Spleen (tissue), 13 donors: ENCODE measurements at regions of chr17 and their contacts with region 1.

Region 1: DNA sequence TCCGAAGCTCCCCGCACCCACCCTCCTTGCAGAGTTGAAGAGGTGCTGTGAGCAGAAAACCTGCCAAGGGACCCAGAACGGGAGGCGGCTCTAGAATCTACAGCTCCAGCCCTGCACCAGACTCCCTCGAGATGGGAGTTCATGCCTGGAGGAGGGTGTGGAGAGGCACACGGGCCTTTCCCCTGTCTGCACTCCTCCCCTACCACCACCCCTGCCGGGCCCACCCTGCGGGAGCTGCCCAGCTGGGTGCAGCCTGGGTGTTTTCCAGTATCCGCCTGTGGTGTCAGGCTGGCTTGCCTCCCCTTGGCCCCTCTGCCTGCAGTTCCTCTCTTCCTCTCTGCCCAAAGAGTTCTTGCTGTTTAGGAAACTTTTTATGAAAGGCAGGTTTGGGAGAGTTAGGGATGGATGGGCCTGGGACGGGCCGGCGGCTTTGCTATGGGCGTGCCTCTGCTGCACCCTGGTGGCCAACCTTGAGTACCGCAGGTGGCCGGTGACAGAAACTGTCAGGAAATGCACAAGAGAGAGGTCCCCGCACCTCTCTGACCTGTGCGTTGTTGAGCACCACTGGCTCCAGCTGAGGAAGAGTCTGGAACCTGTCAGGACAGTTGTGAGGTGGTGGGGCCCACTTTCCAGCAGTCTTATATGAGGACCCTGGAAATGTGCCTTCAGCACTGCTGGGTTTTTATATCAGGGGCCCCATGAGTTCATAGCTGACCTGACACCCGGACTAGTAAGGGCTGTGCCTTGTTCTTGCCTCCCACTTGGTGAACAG is 354.1 kb downstream of the SEC14L1 start:
- DNase-seq: peak; percentile 93
- H3K4me3 ChIP-seq: no peak overlapping the region
- H3K27ac ChIP-seq: peak overlapping the region; percentile 1 to 79 (median 52)
- H3K4me1 ChIP-seq: peaks cover 13 to 60% (median 42%) of the 10 kb centered on the region in 6 donors
- H3K27me3 ChIP-seq: no peaks in the 10 kb centered on the region
- CTCF ChIP-seq: peak; percentile 90 to 99 (median 98)
- POLR2A ChIP-seq: no peak

Region 2: DNA sequence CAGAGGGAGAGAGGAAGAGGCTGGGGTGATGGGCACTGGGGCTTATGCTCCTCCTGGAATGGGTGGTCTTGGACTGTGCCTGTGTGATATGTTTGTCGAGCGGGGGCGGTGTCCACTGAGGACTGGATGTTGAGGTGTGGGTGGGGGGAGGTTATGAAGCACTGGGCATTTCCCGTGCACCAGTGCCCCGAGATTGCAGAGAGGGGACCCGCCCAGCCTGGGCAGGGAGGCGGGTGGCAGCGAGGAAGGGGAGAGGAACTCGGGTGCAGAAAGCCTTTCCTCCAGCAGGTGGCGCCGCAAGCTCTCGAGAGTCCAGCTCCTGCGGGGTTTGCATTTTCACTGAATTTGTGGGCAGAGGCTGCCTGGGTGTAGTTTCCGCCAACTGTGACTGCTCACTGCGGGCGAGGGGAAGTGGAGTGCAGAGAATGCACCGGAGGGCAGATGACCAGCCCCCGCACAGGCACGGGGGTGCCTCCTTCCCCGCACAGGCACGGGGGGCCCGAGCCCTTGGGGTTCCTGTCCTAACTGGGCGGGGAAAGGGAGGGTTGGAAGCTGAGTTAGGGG is 163.5 kb before region 1 on chr17:
- intact Hi-C with region 1: loop called (anchors 5 kb)
- DNase-seq: peak; percentile 99
- H3K4me3 ChIP-seq: peak overlapping the region in 6 of 8 donors; percentile 13 to 53 (median 28)
- H3K27ac ChIP-seq: peak overlapping the region; percentile 59 to 88 (median 84)
- H3K4me1 ChIP-seq: peaks cover 31 to 79% (median 57%) of the 10 kb centered on the region in 6 donors
- H3K27me3 ChIP-seq: no peaks in the 10 kb centered on the region
- CTCF ChIP-seq: peak; percentile 95 to 99 (median 99)
- POLR2A ChIP-seq: peak in 1 of 3 donors; percentile 10

Region 3: GRCh38 chr17:77429919-77430752 is 64.7 kb before region 1 on chr17:
- intact Hi-C with region 1: loop called (anchors 5 kb)
- DNase-seq: peak; percentile 94
- H3K4me3 ChIP-seq: peak overlapping the region in 1 of 8 donors; percentile 9
- H3K27ac ChIP-seq: peak overlapping the region; percentile 27 to 92 (median 78)
- H3K4me1 ChIP-seq: peaks cover 89 to 100% (median 100%) of the 10 kb centered on the region in 6 donors
- H3K27me3 ChIP-seq: no peaks in the 10 kb centered on the region
- CTCF ChIP-seq: peak; percentile 57 to 93 (median 85)
- POLR2A ChIP-seq: no peak